PC-9 (cell line): ENCODE measurements at regions of chr4 and their contacts with region 1.

Region 1: DNA sequence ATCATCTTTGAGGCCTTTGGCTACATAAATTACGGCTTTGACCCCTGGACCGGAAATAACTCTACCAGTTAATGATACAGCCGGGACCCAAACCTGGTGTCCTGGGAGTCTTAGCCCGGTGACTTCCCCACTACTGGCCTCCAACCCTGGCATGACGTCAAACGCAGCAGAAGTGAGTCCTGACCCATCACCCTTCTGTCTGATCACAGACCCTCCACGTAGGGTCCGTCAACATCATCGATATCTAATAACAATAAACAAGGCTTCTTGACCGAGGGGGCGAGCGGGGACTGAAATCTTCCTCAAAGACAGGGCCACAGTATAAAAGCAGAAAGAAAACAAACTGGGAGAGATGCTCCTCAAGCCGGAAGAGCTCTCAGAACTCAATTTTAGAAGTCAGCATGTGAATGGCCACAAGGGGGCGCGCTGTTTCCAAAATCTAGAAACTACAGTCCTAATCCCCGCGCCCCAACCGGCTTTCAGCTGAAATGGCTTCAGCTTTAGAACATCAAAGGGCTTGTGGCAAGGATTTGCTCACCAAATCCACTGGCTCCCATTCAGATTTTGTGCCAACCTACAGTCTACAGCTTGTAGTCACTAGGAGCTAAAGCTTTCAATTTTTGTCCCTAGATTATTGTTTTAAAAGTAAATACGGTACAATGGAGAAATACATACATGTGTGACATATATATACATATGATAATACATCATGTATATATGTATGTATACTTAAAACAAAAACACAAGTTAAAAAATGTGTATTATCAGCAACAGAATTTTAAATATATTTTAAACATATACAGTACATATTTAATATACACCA is 46.4 kb upstream of the ENPP6 start:
- DNase-seq: peak; percentile 65 to 80
- H3K4me3 ChIP-seq: no peak overlapping the region
- H3K27ac ChIP-seq: no peak overlapping the region
- H3K4me1 ChIP-seq: peaks cover 31% of the 10 kb centered on the region
- H3K27me3 ChIP-seq: no peaks in the 10 kb centered on the region
- CTCF ChIP-seq: peak; percentile 83

Region 2: DNA sequence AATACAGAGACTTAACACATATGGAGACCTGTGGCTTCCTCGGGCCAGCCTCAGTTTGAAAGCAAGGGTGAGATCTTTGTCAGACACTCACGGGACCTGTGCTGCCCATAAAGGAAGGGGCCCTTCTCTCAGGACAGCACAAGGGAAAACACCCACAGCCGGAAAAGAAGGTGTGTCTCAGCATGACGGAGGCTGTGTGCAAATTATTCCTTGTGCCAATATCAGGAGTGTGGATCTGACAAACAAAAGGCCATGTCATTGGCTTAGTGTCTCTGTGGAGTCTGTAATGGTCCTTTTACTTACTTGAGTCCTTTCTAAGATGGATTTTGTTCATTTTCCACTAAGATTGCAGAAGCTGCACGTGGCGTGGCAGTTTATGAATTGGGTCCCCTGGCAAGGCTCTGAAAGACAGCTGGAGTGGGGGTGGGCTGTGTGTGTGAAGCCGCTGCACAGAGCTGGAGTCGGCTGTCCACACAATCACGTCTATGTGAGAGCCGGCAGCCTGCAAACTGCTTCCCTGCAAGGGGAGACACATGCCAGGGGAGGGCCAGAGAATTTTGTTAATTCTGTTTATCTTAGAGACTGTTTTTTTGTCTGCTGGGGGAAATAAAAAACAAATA is 48.3 kb before region 1 on chr4:
- CTCF ChIA-PET with region 1: no interaction called
- POLR2A ChIA-PET with region 1: no interaction called
- intact Hi-C with region 1: no loop called
- DNase-seq: no peak
- H3K4me3 ChIP-seq: no peak overlapping the region
- H3K27ac ChIP-seq: no peak overlapping the region
- H3K4me1 ChIP-seq: no peaks in the 10 kb centered on the region
- H3K27me3 ChIP-seq: peaks cover 16% of the 10 kb centered on the region
- CTCF ChIP-seq: no peak

Region 3: GRCh38 chr4:184343502-184344177 is 79.5 kb after region 1 on chr4:
- CTCF ChIA-PET with region 1: interaction called, 3 read pairs
- POLR2A ChIA-PET with region 1: interaction called, 3 read pairs
- intact Hi-C with region 1: loop called (anchors 5 kb)
- DNase-seq: peak; percentile 63 to 64
- H3K4me3 ChIP-seq: peak overlapping the region; percentile 65
- H3K27ac ChIP-seq: no peak overlapping the region; the same call in 1 of the 2 replicates
- H3K4me1 ChIP-seq: peaks cover 18% of the 10 kb centered on the region
- H3K27me3 ChIP-seq: no peaks in the 10 kb centered on the region
- CTCF ChIP-seq: no peak

Region 4: GRCh38 chr4:184474263-184475095 is 210.4 kb after region 1 on chr4 and contains the start of gene IRF2:
- CTCF ChIA-PET with region 1: interaction called, 4 read pairs
- POLR2A ChIA-PET with region 1: interaction called, 4 read pairs
- intact Hi-C with region 1: loop called (anchors 1 kb)
- DNase-seq: peak; percentile 81 to 93
- H3K4me3 ChIP-seq: peak within 1 kb of the TSS; percentile 97
- H3K27ac ChIP-seq: peak within 1 kb of the TSS; percentile 83
- H3K4me1 ChIP-seq: peaks cover 21% of the 10 kb centered on the region
- H3K27me3 ChIP-seq: no peaks in the 10 kb centered on the region
- CTCF ChIP-seq: no peak
- total RNA-seq, gene IRF2: 27.4 and 34.4 TPM in 2 replicates

Region 5: DNA sequence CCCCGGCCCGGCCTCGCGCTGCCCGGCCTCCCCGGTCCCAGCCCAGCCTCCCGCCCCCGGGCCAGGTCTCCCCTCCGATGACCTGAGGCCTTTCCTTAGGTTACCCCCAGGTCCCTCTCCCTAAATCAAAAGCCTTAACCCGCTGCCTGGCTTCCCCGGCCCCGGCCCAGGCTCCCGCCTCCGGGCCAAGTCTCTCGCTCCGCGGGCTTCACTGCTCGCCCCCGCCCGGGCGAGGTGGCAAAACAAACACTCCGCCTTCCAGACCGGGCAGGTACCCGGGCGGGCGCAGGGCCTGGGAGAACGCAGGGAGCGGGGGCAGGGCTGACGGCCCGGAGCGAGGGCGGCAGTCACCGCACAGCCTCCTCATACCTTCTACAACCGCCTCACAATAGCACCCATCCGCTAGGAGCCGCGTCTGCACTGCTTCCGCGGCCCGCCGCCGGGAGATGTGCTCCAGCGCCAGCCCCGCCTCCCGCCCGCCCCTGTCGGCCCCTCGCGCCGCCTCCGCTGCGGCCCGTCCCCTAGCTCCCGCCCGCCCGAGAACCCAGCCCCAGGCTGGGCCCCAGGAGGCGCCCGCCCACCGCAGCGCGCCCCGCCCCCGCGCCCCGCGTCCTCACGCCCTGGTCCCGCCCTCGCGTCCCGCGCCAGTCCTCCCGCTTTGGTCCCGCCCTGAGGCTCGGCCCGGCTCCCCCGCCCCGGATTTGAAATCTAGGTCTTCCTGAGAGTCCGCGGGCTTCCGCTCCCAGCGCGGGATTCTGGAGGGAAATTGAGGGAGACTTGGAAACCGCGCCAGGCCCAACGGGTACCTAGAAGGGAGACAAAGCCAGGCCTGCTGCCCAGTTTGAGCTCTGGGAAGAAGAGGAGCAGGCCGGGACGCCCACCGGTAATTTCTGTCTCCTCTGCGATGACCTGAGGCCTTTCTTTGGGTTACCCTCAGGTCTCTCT is 385.2 kb after region 1 on chr4 and contains the starts of genes CASP3 and PRIMPOL:
- CTCF ChIA-PET with region 1: interaction called, 3 read pairs
- POLR2A ChIA-PET with region 1: interaction called, 12 read pairs
- intact Hi-C with region 1: loop called (anchors 1 kb)
- DNase-seq: peak; percentile 66 to 97
- H3K4me3 ChIP-seq: peak within 1 kb of the TSS; percentile 83
- H3K27ac ChIP-seq: peak within 1 kb of the TSS; percentile 73
- H3K4me1 ChIP-seq: peaks cover 20% of the 10 kb centered on the region
- H3K27me3 ChIP-seq: no peaks in the 10 kb centered on the region
- CTCF ChIP-seq: no peak
- total RNA-seq, gene CASP3: 33.5 and 35.7 TPM in 2 replicates
- total RNA-seq, gene PRIMPOL: 23.2 and 29.5 TPM in 2 replicates

Region 6: GRCh38 chr4:184745831-184746795 is 482.0 kb after region 1 on chr4:
- CTCF ChIA-PET with region 1: no interaction called
- POLR2A ChIA-PET with region 1: no interaction called
- intact Hi-C with region 1: loop called (anchors 5 kb)
- DNase-seq: peak; percentile 64 to 88
- H3K4me3 ChIP-seq: peak overlapping the region; percentile 36; the same call in 1 of the 2 replicates
- H3K27ac ChIP-seq: peak overlapping the region; percentile 98
- H3K4me1 ChIP-seq: peaks cover 42% of the 10 kb centered on the region
- H3K27me3 ChIP-seq: no peaks in the 10 kb centered on the region
- CTCF ChIP-seq: peak; percentile 76

Region 7: GRCh38 chr4:185134307-185134869 is 870.3 kb after region 1 on chr4:
- CTCF ChIA-PET with region 1: interaction called, 3 read pairs
- POLR2A ChIA-PET with region 1: no interaction called
- intact Hi-C with region 1: loop called (anchors 10 kb)
- DNase-seq: no peak
- H3K4me3 ChIP-seq: no peak overlapping the region
- H3K27ac ChIP-seq: no peak overlapping the region
- H3K4me1 ChIP-seq: no peaks in the 10 kb centered on the region
- H3K27me3 ChIP-seq: no peaks in the 10 kb centered on the region
- CTCF ChIP-seq: peak; percentile 87